GM10248 (cell line): ENCODE measurements at regions of chr15 and their contacts with region 1.

Region 1: DNA sequence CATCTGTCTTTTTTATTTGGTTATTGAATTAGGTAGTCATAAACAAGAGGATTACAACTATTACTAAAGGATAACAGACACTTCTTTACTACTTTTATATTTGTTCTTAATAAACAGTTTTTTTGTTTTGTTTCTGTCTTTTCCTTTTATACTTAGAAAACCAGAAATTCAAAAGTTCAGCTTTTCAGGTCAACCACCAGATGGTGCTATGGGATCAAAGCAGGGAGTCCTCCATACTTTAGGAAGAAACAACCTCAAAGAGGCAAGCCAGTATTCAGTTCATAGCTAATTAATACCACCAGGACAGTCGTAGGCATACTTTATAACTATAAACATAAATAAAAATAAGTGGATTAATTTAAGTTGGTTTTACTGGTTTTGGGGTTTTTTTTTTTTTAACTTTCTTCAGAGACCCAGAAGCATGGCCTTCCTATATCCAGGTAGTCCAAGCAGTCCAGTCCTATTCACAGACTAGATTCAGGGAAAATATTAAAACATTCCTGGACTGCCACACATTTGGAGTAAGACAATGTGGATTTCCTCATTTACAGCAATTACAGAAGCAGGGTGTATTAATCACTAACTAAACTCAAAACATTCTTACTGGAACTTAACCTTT is 16.0 kb upstream of the EID1 start:
- DNase-seq: peak; percentile 56
- CTCF ChIP-seq: peak; percentile 75

Region 2: GRCh38 chr15:48794697-48795134 is 67.2 kb before region 1 on chr15:
- CTCF ChIA-PET with region 1: no interaction called
- POLR2A ChIA-PET with region 1: no interaction called
- DNase-seq: peak; percentile 59
- CTCF ChIP-seq: no peak

Region 3: GRCh38 chr15:48845123-48845522 is 16.8 kb before region 1 on chr15:
- CTCF ChIA-PET with region 1: interaction called, 10 read pairs
- POLR2A ChIA-PET with region 1: no interaction called
- DNase-seq: no peak
- CTCF ChIP-seq: no peak

Region 4: GRCh38 chr15:48963524-48964113 is 101.7 kb after region 1 on chr15 and contains the start of gene SHC4:
- CTCF ChIA-PET with region 1: interaction called, 13 read pairs
- POLR2A ChIA-PET with region 1: no interaction called
- DNase-seq: peak; percentile 60
- CTCF ChIP-seq: no peak

Region 5: GRCh38 chr15:49145651-49146609 is 284.0 kb after region 1 on chr15:
- CTCF ChIA-PET with region 1: interaction called, 15 read pairs
- POLR2A ChIA-PET with region 1: no interaction called
- DNase-seq: peak; percentile 24
- CTCF ChIP-seq: peak; percentile 50

Region 6: GRCh38 chr15:50003786-50004334 is 1141.9 kb after region 1 on chr15:
- CTCF ChIA-PET with region 1: interaction called, 17 read pairs
- POLR2A ChIA-PET with region 1: no interaction called
- DNase-seq: peak; percentile 65
- CTCF ChIP-seq: peak; percentile 63